ENCODE measurements at regions of chr5 and their contacts with region 1.

Region 1: DNA sequence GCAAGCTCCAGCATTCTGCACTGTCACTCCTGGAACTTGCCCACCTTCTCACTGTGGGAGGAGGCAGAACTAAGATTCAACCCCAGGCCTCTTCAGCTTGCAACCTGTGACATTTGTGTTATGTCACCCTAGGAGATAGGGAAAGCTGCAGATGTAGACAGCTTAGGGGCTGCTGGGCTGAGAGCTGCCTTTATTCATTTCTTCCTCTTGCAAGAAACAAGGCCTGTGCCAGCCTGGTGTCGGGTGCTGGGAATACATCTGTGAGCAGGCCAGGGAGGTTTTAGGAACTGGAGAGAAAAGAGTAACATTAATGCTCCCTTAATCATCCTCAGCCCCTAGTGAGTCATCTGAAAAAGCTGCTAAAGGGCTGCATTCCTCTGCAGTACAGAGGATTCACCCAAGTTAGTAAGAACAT is 101.8 kb downstream of the FGF18 start:
- DNase-seq: peak; percentile 95
- ATAC-seq: peak; percentile 94
- H3K4me3 ChIP-seq: no peak overlapping the region
- H3K27ac ChIP-seq: peak overlapping the region; percentile 69
- H3K4me1 ChIP-seq: peaks cover 27% of the 10 kb centered on the region
- H3K27me3 ChIP-seq: no peaks in the 10 kb centered on the region
- CTCF ChIP-seq: no peak

Region 2: GRCh38 chr5:171427318-171428167 is 93.7 kb before region 1 on chr5:
- CTCF ChIA-PET with region 1: no interaction called
- POLR2A ChIA-PET with region 1: no interaction called
- intact Hi-C with region 1: no loop called
- DNase-seq: no peak
- ATAC-seq: no peak
- H3K4me3 ChIP-seq: no peak overlapping the region
- H3K27ac ChIP-seq: no peak overlapping the region
- H3K4me1 ChIP-seq: no peaks in the 10 kb centered on the region
- H3K27me3 ChIP-seq: no peaks in the 10 kb centered on the region
- CTCF ChIP-seq: no peak

Region 3: DNA sequence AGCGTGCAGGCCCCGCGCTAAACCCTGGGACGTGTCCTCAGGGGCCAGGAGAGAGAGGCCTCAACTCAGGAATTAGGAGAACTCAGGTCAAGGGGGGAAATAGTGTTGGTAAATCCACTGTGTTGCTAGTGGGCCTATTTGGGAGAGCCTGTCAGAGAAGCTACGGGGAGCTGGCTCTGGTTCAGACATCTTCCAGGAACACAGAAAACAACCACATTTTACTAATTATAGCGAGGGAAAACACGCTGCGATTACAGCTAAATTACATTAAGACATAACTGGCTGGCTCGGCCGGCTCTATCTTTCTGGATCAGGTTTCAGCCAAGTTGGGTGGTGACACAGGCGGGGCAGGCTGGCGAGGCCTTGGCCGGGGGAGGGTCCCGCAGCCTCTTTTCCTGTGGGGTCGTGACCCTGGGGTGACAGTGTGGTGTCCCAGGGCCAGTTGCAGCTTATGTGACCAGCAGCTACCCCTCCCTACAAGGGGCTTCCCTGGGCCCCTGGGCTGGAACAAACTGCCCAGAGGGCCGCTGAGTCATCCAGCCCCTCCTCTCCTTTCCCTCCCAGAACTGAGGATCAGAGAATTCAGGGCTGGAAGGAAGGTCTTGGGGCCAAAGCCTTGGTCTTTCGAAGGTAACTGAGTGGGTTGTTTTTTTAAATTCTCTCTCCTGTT is 26.6 kb before region 1 on chr5:
- CTCF ChIA-PET with region 1: interaction called, 3 read pairs
- POLR2A ChIA-PET with region 1: no interaction called
- intact Hi-C with region 1: loop called (anchors 2 kb)
- DNase-seq: peak; percentile 64
- ATAC-seq: peak; percentile 81
- H3K4me3 ChIP-seq: peak overlapping the region; percentile 36; the same call in 1 of the 2 replicates
- H3K27ac ChIP-seq: peak overlapping the region; percentile 82
- H3K4me1 ChIP-seq: peaks cover 21% of the 10 kb centered on the region
- H3K27me3 ChIP-seq: peaks cover 7% of the 10 kb centered on the region; the same call in 1 of the 2 replicates
- CTCF ChIP-seq: no peak

Region 4: GRCh38 chr5:172114875-172115422 is 593.7 kb after region 1 on chr5:
- CTCF ChIA-PET with region 1: no interaction called
- POLR2A ChIA-PET with region 1: no interaction called
- intact Hi-C with region 1: no loop called
- DNase-seq: no peak
- ATAC-seq: no peak
- H3K4me3 ChIP-seq: no peak overlapping the region
- H3K27ac ChIP-seq: no peak overlapping the region
- H3K4me1 ChIP-seq: no peaks in the 10 kb centered on the region; the same call in 1 of the 2 replicates
- H3K27me3 ChIP-seq: no peaks in the 10 kb centered on the region
- CTCF ChIP-seq: no peak